ENCODE measurements at regions of chr19 and their contacts with region 1.

Region 1: DNA sequence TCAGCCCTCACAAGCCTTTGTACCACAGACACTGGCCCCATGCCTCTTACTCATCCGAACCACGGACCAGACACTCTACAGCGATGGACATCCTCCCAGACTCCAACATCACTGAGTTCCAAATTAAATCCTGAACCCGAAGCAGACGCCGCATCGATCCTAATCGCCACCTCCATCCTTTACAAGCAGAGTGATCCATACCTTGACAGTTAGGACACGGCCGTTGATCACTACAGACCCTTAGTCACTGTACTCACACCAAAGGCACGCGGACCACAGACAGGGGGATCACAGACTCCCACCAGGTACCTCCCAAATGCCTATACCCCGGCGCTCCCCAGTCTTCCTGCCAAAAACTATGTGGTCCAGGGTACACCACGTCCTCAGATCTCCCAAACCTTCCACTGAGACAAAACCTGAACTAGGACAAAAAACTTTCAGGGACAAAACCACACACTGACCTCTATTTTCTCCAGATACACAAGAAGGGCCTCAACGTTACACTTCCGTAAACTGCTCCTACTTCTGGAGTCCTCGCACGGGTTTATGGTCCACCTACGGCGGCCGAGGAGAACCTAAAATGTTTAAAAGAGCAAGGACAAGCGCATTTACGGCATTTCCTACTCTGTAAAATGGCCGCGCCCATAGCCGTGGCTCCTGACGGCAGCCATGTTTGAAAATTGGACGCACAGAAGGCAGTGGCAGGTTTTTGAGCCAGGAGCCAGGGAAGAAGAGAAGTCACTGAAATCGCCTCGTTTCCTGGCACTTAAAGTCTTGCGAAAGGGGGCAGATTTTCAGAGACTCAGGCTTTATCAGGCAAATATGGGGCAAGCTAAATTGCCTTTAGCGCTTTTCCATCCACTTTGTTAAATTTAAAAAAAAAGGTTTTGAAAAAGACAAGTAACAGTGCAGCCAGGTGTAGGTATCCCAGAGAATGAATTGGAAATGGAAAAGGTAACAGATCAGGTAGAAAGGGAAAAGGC is at the start of gene ZNF350:
- DNase-seq: peak; percentile 94
- H3K4me3 ChIP-seq: peak within 1 kb of the TSS; percentile 94
- H3K27ac ChIP-seq: no peak within 1 kb of the TSS
- H3K4me1 ChIP-seq: peaks cover 4% of the 10 kb centered on the region
- CTCF ChIP-seq: no peak
- total RNA-seq, gene ZNF350: 3.1 and 5.2 TPM in 2 replicates

Region 2: GRCh38 chr19:51926784-51927742 is 59.5 kb before region 1 on chr19 and contains the start of gene ZNF613:
- CTCF ChIA-PET with region 1: no interaction called
- POLR2A ChIA-PET with region 1: no interaction called
- intact Hi-C with region 1: loop called (anchors 1 kb)
- DNase-seq: peak; percentile 87
- H3K4me3 ChIP-seq: peak within 1 kb of the TSS; percentile 75
- H3K27ac ChIP-seq: peak within 1 kb of the TSS; percentile 48
- H3K4me1 ChIP-seq: no peaks in the 10 kb centered on the region
- CTCF ChIP-seq: peak; percentile 32; the same call in 1 of the 2 replicates
- total RNA-seq, gene ZNF613: 4.6 and 10.0 TPM in 2 replicates

Region 3: GRCh38 chr19:52028027-52028779 is 41.6 kb after region 1 on chr19 and contains the start of gene ZNF614:
- CTCF ChIA-PET with region 1: no interaction called
- POLR2A ChIA-PET with region 1: no interaction called
- intact Hi-C with region 1: loop called (anchors 1 kb)
- DNase-seq: peak; percentile 86
- H3K4me3 ChIP-seq: peak within 1 kb of the TSS; percentile 76
- H3K27ac ChIP-seq: peak within 1 kb of the TSS; percentile 62
- H3K4me1 ChIP-seq: peaks cover 10% of the 10 kb centered on the region
- CTCF ChIP-seq: no peak
- total RNA-seq, gene ZNF614: 10.0 and 11.2 TPM in 2 replicates